IMR-90 (cell line): ENCODE measurements at regions of chr18 and their contacts with region 1.

Region 1: DNA sequence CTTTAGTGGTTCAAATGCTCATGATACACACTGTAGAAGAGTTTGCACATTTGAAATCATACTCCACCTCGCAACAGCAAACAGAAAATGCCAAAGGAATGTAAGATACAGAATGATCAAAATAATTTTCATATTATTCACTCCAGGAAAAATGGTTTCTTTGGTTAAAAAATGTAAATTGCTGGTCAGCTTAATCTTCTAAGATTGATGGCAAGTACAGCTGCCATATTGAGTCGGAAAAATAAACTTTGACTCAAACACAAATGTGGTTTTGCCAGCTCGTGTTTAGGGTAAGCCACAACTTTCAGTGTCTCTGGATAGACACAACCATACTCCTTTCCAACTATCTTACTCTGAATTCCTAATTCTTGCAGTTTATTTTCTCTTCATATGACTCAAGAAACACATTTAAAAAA is 154.9 kb upstream of the SMIM21 start:
- DNase-seq: peak; percentile 76
- ATAC-seq: peak; percentile 86
- H3K4me3 ChIP-seq: no peak overlapping the region
- H3K27ac ChIP-seq: peak overlapping the region; percentile 92; the same call in 1 of the 2 replicates
- H3K4me1 ChIP-seq: peaks cover 11% of the 10 kb centered on the region
- H3K27me3 ChIP-seq: no peaks in the 10 kb centered on the region
- CTCF ChIP-seq: no peak
- POLR2A ChIP-seq: no peak
- RAD21 ChIP-seq: no peak

Region 2: DNA sequence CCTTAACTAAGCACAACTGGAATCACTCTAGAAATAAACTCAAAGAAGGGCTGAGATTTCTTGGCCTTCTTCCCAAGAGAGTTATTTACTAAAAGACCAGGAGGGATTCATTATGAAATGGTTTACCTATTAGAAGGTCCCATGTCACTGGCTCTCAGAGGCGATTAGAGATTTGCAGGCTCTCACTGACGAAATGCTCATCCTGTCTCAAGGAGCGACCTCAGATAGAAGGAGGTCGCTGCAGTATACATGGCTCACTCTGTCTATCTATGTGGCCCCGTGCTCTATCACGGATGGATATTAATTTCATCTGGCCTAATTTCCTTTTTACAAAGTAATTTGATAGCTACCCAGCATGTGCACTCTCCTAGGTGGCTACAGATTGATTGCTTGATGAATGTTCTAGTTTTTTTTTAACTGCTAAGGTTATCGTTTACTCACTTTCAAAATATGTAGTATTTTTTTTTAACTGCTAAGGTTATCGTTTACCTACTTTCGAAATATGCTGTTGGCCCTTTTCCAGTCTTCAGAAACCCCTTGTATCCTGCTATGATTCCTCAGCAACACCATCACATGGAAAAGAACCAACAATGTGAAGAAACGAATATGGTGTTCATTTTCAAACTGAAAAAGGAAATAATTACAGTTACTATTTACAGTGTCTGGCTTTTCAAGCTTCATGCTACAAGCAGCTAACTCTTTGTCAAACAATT is 164.0 kb before region 1 on chr18:
- CTCF ChIA-PET with region 1: no interaction called
- POLR2A ChIA-PET with region 1: no interaction called
- dilution Hi-C with region 1: no loop called
- in situ Hi-C with region 1: no loop called
- intact Hi-C with region 1: loop called (anchors 10 kb)
- DNase-seq: no peak
- ATAC-seq: 0 out of 2 replicates have a peak, but pooled peaks have one; percentile 11
- H3K4me3 ChIP-seq: no peak overlapping the region
- H3K27ac ChIP-seq: no peak overlapping the region
- H3K4me1 ChIP-seq: peaks cover 2% of the 10 kb centered on the region
- H3K27me3 ChIP-seq: no peaks in the 10 kb centered on the region; the same call in 1 of the 2 replicates
- CTCF ChIP-seq: no peak
- POLR2A ChIP-seq: no peak
- RAD21 ChIP-seq: no peak

Region 3: GRCh38 chr18:75489493-75490190 is 92.8 kb before region 1 on chr18:
- CTCF ChIA-PET with region 1: no interaction called
- POLR2A ChIA-PET with region 1: no interaction called
- dilution Hi-C with region 1: no loop called
- in situ Hi-C with region 1: no loop called
- intact Hi-C with region 1: loop called (anchors 5 kb)
- DNase-seq: peak; percentile 98
- ATAC-seq: peak; percentile 99
- H3K4me3 ChIP-seq: no peak overlapping the region
- H3K27ac ChIP-seq: peak overlapping the region; percentile 99
- H3K4me1 ChIP-seq: peaks cover 9% of the 10 kb centered on the region
- H3K27me3 ChIP-seq: no peaks in the 10 kb centered on the region
- CTCF ChIP-seq: no peak
- POLR2A ChIP-seq: no peak
- RAD21 ChIP-seq: 0 out of 2 replicates have a peak, but pooled peaks have one; percentile 17

Region 4: GRCh38 chr18:75500545-75500944 is 81.9 kb before region 1 on chr18:
- CTCF ChIA-PET with region 1: no interaction called
- POLR2A ChIA-PET with region 1: no interaction called
- dilution Hi-C with region 1: no loop called
- in situ Hi-C with region 1: no loop called
- intact Hi-C with region 1: loop called (anchors 5 kb)
- DNase-seq: peak; percentile 86
- ATAC-seq: peak; percentile 79
- H3K4me3 ChIP-seq: no peak overlapping the region
- H3K27ac ChIP-seq: no peak overlapping the region
- H3K4me1 ChIP-seq: peaks cover 14% of the 10 kb centered on the region
- H3K27me3 ChIP-seq: no peaks in the 10 kb centered on the region
- CTCF ChIP-seq: no peak
- POLR2A ChIP-seq: no peak
- RAD21 ChIP-seq: no peak

Region 5: DNA sequence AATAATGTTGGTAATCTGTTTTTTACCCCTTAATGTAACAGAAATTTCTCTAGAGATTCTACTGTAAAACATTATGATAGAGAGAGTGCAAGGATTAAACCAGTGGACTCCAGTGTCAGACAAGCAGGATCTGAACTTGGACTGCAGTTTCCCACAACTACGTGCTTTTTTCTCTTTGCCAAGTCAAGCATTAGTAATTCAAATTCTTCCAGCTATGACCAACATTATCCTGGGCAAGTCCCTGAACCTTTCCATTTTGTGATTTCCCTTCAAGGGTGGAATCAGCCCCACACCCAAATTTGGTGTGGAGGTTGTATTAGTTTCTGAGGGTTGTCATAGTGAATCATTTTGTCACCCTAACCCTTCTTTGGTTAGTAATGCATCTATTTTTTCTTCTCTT is 430.6 kb after region 1 on chr18:
- CTCF ChIA-PET with region 1: no interaction called
- POLR2A ChIA-PET with region 1: no interaction called
- dilution Hi-C with region 1: no loop called
- in situ Hi-C with region 1: no loop called
- intact Hi-C with region 1: no loop called
- DNase-seq: no peak
- ATAC-seq: no peak
- H3K4me3 ChIP-seq: no peak overlapping the region
- H3K27ac ChIP-seq: no peak overlapping the region
- H3K4me1 ChIP-seq: no peaks in the 10 kb centered on the region
- H3K27me3 ChIP-seq: no peaks in the 10 kb centered on the region
- CTCF ChIP-seq: no peak
- POLR2A ChIP-seq: no peak
- RAD21 ChIP-seq: no peak

Region 6: DNA sequence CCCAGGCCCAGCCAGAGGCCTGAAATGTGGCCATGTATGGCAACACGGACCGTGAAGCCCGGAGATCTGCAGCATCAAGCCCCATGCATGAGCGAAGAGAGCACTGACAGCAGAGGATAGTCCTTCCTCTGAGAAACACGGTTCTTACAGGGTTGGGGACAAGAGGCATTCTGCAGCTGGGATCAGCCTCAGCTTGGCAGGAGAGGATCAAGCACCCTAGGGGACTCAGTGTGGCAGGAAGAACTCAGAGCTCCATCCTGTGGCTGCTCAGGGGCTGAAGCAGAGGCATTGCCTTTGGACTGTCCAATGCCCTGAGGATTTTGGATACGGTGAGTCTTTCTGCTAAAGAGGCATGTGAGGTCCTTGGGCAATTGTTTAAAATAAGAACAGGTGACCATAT is 543.9 kb after region 1 on chr18:
- CTCF ChIA-PET with region 1: no interaction called
- POLR2A ChIA-PET with region 1: no interaction called
- dilution Hi-C with region 1: no loop called
- in situ Hi-C with region 1: no loop called
- intact Hi-C with region 1: no loop called
- DNase-seq: no peak
- ATAC-seq: no peak
- H3K4me3 ChIP-seq: no peak overlapping the region
- H3K27ac ChIP-seq: no peak overlapping the region
- H3K4me1 ChIP-seq: no peaks in the 10 kb centered on the region
- H3K27me3 ChIP-seq: no peaks in the 10 kb centered on the region
- CTCF ChIP-seq: no peak
- POLR2A ChIP-seq: no peak
- RAD21 ChIP-seq: no peak